Activated naive CD8-positive, alpha-beta T cell treated with anti-CD3 and anti-CD28 coated beads, Interleukin-2, amount 10 ng/mL, durations not matched to agents 7 days and 5 days (primary cell): ENCODE measurements at regions of chr3 and their contacts with region 1.

Region 1: GRCh38 chr3:40309418-40309924 is at the start of gene EIF1B:
- DNase-seq: peak; percentile 98
- ATAC-seq: peak; percentile 90
- H3K4me3 Mint-ChIP-seq: peak within 1 kb of the TSS; percentile 100
- H3K27ac Mint-ChIP-seq: peak within 1 kb of the TSS; percentile 94
- H3K4me1 Mint-ChIP-seq: peaks cover 20% of the 10 kb centered on the region
- H3K27me3 Mint-ChIP-seq: no peaks in the 10 kb centered on the region
- total RNA-seq, gene EIF1B: 35.1 to 38.3 TPM

Region 2: DNA sequence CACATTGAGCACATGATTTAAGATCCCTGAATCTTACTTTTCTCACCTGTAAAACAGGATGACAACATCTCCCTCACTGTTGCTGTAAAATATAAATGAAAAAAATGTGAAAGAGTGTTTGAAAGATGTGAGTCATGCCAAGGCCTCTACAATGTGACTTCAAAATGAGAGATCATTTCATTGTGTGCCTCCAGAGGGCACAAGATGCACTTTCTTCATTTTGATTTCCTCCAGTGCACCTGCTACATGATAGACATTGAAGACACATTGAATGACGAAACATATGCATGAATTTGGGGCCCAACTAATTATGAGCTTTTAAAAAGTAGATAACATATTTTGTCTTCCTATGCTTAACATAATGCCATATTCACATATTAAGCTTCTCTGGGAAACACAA is 671.7 kb before region 1 on chr3:
- POLR2A ChIA-PET with region 1: no interaction called
- DNase-seq: no peak
- ATAC-seq: no peak
- H3K4me3 Mint-ChIP-seq: no peak overlapping the region
- H3K27ac Mint-ChIP-seq: no peak overlapping the region
- H3K4me1 Mint-ChIP-seq: peaks cover 3% of the 10 kb centered on the region
- H3K27me3 Mint-ChIP-seq: no peaks in the 10 kb centered on the region

Region 3: DNA sequence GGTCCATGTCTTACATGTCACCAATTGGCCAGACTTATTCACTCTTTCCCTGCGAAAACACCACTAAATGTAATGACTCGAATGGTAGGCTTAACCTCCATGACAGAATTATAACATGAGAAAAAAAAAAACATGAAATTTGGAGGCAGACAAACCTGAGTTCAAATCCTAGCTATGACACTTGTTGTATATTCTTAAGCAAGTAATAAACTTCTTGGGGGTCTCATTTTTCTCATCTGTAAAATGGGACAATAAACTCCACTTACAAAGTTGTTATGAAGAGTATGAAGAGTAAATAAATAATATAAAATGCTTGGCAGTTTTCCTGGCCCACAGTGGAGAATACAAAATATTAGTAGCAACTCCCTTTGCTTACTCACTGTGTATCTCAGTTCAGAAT is 11.4 kb before region 1 on chr3:
- POLR2A ChIA-PET with region 1: interaction called, 10 read pairs
- DNase-seq: no peak
- ATAC-seq: no peak
- H3K4me3 Mint-ChIP-seq: no peak overlapping the region
- H3K27ac Mint-ChIP-seq: no peak overlapping the region
- H3K4me1 Mint-ChIP-seq: peaks cover 1% of the 10 kb centered on the region
- H3K27me3 Mint-ChIP-seq: no peaks in the 10 kb centered on the region

Region 4: GRCh38 chr3:40329071-40329470 is 19.6 kb after region 1 on chr3:
- POLR2A ChIA-PET with region 1: no interaction called
- DNase-seq: no peak
- ATAC-seq: no peak
- H3K4me3 Mint-ChIP-seq: no peak overlapping the region
- H3K27ac Mint-ChIP-seq: no peak overlapping the region
- H3K4me1 Mint-ChIP-seq: peaks cover 4% of the 10 kb centered on the region
- H3K27me3 Mint-ChIP-seq: no peaks in the 10 kb centered on the region